Mammary epithelial cell (primary cell): ENCODE measurements at regions of chr1 and their contacts with region 1.

Region 1: GRCh38 chr1:77143529-77144121 is 75.6 kb downstream of the PIGK start:
- DNase-seq: no peak
- H3K4me3 ChIP-seq: no peak overlapping the region
- H3K27ac ChIP-seq: no peak overlapping the region
- H3K4me1 ChIP-seq: no peaks in the 10 kb centered on the region
- H3K27me3 ChIP-seq: no peaks in the 10 kb centered on the region
- CTCF ChIP-seq: peak; percentile 27 to 40

Region 2: DNA sequence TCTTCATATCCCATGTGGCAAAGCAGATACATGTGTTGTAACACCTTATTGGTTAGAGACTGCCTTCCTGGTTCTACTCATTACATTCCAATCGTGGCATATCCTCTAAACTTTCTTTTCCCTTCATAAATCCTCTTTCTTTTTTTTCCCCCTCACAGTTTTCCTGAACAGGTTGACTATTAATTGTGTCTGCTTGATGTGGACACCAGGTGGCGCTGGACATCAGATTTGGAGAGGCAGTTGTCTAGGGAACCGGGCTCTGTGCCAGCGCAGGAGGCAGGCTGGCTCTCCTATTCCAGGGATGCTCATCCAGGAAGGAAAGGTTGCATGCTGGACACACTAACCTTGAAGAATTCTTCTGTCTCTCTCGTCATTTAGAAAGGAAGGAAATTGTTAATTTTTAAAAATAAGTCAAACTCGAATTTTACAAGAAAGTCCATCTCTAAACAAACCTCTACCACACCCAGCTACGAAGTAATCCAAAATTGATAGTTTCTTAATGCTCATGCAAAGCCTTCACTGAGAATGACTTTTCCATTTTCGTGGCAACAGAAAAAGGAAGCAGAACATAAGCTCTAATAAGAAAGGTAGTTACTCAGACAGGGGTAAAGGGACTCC is 1152.0 kb before region 1 on chr1:
- CTCF ChIA-PET with region 1: no interaction called
- dilution Hi-C with region 1: no loop called
- in situ Hi-C with region 1: no loop called
- intact Hi-C with region 1: loop called (anchors 5 kb)
- DNase-seq: peak; percentile 65
- H3K4me3 ChIP-seq: no peak overlapping the region
- H3K27ac ChIP-seq: no peak overlapping the region
- H3K4me1 ChIP-seq: no peaks in the 10 kb centered on the region
- H3K27me3 ChIP-seq: peaks cover 12% of the 10 kb centered on the region
- CTCF ChIP-seq: peak; percentile 82 to 89

Region 3: DNA sequence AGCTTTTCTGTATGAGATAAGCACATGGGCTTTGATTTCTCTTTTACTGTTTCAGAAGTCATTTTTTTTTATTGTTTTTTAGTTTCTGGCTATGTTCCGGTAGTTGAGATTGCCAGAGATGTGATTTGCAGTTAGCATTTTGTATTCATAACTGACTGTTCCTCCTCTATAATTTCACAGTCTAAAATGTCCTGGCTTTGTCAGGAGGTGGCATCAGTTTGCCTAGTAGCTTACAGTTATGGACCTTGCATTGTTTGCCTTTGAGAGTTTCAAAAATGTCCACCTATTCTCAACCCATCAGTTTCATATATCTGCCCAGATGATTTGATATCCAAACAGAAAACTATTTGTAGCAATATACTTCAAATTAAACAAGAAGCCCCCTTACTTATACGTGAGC is 1108.6 kb before region 1 on chr1:
- CTCF ChIA-PET with region 1: no interaction called
- dilution Hi-C with region 1: no loop called
- in situ Hi-C with region 1: no loop called
- intact Hi-C with region 1: loop called (anchors 5 kb)
- DNase-seq: no peak
- H3K4me3 ChIP-seq: no peak overlapping the region
- H3K27ac ChIP-seq: no peak overlapping the region
- H3K4me1 ChIP-seq: no peaks in the 10 kb centered on the region
- H3K27me3 ChIP-seq: peaks cover 1% of the 10 kb centered on the region
- CTCF ChIP-seq: peak in 1 of 2 donors; percentile 38

Region 4: GRCh38 chr1:76330991-76331603 is 812.5 kb before region 1 on chr1:
- CTCF ChIA-PET with region 1: no interaction called
- dilution Hi-C with region 1: no loop called
- in situ Hi-C with region 1: loop called (anchors 25 kb)
- intact Hi-C with region 1: loop called (anchors 5 kb)
- DNase-seq: peak; percentile 46
- H3K4me3 ChIP-seq: no peak overlapping the region
- H3K27ac ChIP-seq: no peak overlapping the region
- H3K4me1 ChIP-seq: no peaks in the 10 kb centered on the region
- H3K27me3 ChIP-seq: no peaks in the 10 kb centered on the region
- CTCF ChIP-seq: peak; percentile 86 to 97

Region 5: DNA sequence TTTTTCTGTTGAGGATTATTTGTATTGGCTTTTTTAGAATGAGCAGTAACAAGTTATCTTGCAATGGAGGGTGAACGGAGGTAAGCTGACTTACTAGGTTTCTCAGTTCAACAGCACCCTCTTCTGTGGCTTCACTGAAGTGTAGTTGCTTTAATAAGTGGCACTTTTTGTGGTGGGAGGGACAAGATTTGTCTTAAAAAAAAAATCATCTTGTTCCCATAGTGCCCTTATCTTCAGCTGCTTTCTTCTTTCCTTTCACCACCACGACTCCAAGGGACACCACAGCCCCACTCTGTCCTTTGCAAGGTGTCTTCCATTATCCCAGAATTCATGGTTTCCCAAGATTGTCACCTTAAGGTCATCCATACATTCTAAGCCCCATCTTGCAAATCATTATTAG is 17.3 kb before region 1 on chr1:
- CTCF ChIA-PET with region 1: no interaction called
- dilution Hi-C with region 1: no loop called
- in situ Hi-C with region 1: no loop called
- intact Hi-C with region 1: no loop called
- DNase-seq: peak; percentile 51
- H3K4me3 ChIP-seq: no peak overlapping the region
- H3K27ac ChIP-seq: no peak overlapping the region
- H3K4me1 ChIP-seq: no peaks in the 10 kb centered on the region
- H3K27me3 ChIP-seq: no peaks in the 10 kb centered on the region
- CTCF ChIP-seq: peak; percentile 61 to 76

Region 6: DNA sequence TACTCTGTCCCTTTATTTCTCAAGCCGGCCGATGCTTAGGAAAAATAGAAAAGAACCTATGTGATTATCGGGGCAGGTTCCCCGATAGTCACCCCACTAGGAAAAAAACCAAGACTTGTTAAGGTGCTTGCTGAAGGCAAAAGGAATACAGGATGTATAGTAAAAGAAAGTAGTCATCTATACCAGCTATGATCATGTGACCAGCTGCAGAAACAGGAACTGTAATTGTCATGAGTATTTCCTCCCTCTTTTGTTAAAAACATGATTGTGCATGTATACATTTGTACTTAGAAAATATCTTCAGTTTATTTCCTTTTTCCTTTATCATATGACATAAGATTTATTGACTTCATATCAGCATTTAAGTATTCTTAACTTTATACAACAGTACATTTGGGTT is 45.1 kb after region 1 on chr1:
- CTCF ChIA-PET with region 1: no interaction called
- dilution Hi-C with region 1: no loop called
- in situ Hi-C with region 1: no loop called
- intact Hi-C with region 1: no loop called
- DNase-seq: no peak
- H3K4me3 ChIP-seq: no peak overlapping the region
- H3K27ac ChIP-seq: no peak overlapping the region
- H3K4me1 ChIP-seq: no peaks in the 10 kb centered on the region
- H3K27me3 ChIP-seq: no peaks in the 10 kb centered on the region
- CTCF ChIP-seq: no peak

Region 7: GRCh38 chr1:77313491-77313890 is 169.9 kb after region 1 on chr1:
- CTCF ChIA-PET with region 1: no interaction called
- dilution Hi-C with region 1: no loop called
- in situ Hi-C with region 1: no loop called
- intact Hi-C with region 1: loop called (anchors 2 kb)
- DNase-seq: no peak
- H3K4me3 ChIP-seq: no peak overlapping the region
- H3K27ac ChIP-seq: no peak overlapping the region
- H3K4me1 ChIP-seq: peaks cover 5% of the 10 kb centered on the region
- H3K27me3 ChIP-seq: no peaks in the 10 kb centered on the region
- CTCF ChIP-seq: peak; percentile 20 to 35

Region 8: GRCh38 chr1:77416692-77417450 is 273.2 kb after region 1 on chr1:
- CTCF ChIA-PET with region 1: no interaction called
- dilution Hi-C with region 1: no loop called
- in situ Hi-C with region 1: no loop called
- intact Hi-C with region 1: loop called (anchors 2 kb)
- DNase-seq: no peak
- H3K4me3 ChIP-seq: no peak overlapping the region
- H3K27ac ChIP-seq: no peak overlapping the region
- H3K4me1 ChIP-seq: peaks cover 6% of the 10 kb centered on the region
- H3K27me3 ChIP-seq: no peaks in the 10 kb centered on the region
- CTCF ChIP-seq: peak; percentile 57 to 58

Region 9: GRCh38 chr1:77533660-77534305 is 390.2 kb after region 1 on chr1:
- CTCF ChIA-PET with region 1: no interaction called
- dilution Hi-C with region 1: no loop called
- in situ Hi-C with region 1: loop called in 1 of 2 experiments (anchors 10 kb)
- intact Hi-C with region 1: loop called (anchors 1 kb)
- DNase-seq: peak; percentile 35
- H3K4me3 ChIP-seq: no peak overlapping the region
- H3K27ac ChIP-seq: no peak overlapping the region
- H3K4me1 ChIP-seq: peaks cover 28% of the 10 kb centered on the region
- H3K27me3 ChIP-seq: no peaks in the 10 kb centered on the region
- CTCF ChIP-seq: peak; percentile 71 to 81